Activated CD4-positive, alpha-beta T cell treated with anti-CD3 and anti-CD28 coated beads, Interleukin-2, amount 10 ng/mL, durations not matched to agents 24 days and 14 days (primary cell): ENCODE measurements at regions of chr6 and their contacts with region 1.

Region 1: GRCh38 chr6:36123257-36124139 is 6.8 kb upstream of the MAPK13 start:
- DNase-seq: peak; percentile 97
- H3K4me3 Mint-ChIP-seq: peak overlapping the region; percentile 46
- H3K27ac Mint-ChIP-seq: peak overlapping the region; percentile 79
- H3K4me1 Mint-ChIP-seq: peaks cover 72% of the 10 kb centered on the region
- H3K27me3 Mint-ChIP-seq: no peaks in the 10 kb centered on the region

Region 2: GRCh38 chr6:35669451-35670045 is 453.9 kb before region 1 on chr6:
- intact Hi-C with region 1: no loop called
- DNase-seq: no peak
- H3K4me3 Mint-ChIP-seq: peak overlapping the region; percentile 57
- H3K27ac Mint-ChIP-seq: peak overlapping the region; percentile 73
- H3K4me1 Mint-ChIP-seq: peaks cover 35% of the 10 kb centered on the region
- H3K27me3 Mint-ChIP-seq: no peaks in the 10 kb centered on the region

Region 3: GRCh38 chr6:36177166-36177565 is 53.7 kb after region 1 on chr6:
- intact Hi-C with region 1: no loop called
- DNase-seq: peak; percentile 67
- H3K4me3 Mint-ChIP-seq: no peak overlapping the region
- H3K27ac Mint-ChIP-seq: peak overlapping the region; percentile 75
- H3K4me1 Mint-ChIP-seq: peaks cover 11% of the 10 kb centered on the region
- H3K27me3 Mint-ChIP-seq: peaks cover 3% of the 10 kb centered on the region

Region 4: GRCh38 chr6:36302227-36302976 is 178.9 kb after region 1 on chr6:
- intact Hi-C with region 1: loop called (anchors 5 kb)
- DNase-seq: peak; percentile 97
- H3K4me3 Mint-ChIP-seq: no peak overlapping the region
- H3K27ac Mint-ChIP-seq: no peak overlapping the region
- H3K4me1 Mint-ChIP-seq: peaks cover 3% of the 10 kb centered on the region
- H3K27me3 Mint-ChIP-seq: peaks cover 21% of the 10 kb centered on the region